PC-9 (cell line): ENCODE measurements at regions of chr19 and their contacts with region 1.

Region 1: GRCh38 chr19:51777570-51778462 is 16.8 kb downstream of the FPR2 start:
- DNase-seq: peak; percentile 44 to 63
- H3K4me3 ChIP-seq: no peak overlapping the region
- H3K27ac ChIP-seq: no peak overlapping the region
- H3K4me1 ChIP-seq: no peaks in the 10 kb centered on the region
- H3K27me3 ChIP-seq: peaks cover 25% of the 10 kb centered on the region
- CTCF ChIP-seq: peak; percentile 86

Region 2: GRCh38 chr19:51422053-51422448 is 355.8 kb before region 1 on chr19:
- CTCF ChIA-PET with region 1: no interaction called
- POLR2A ChIA-PET with region 1: no interaction called
- intact Hi-C with region 1: loop called (anchors 5 kb)
- DNase-seq: peak; percentile 56 to 87
- H3K4me3 ChIP-seq: no peak overlapping the region
- H3K27ac ChIP-seq: no peak overlapping the region
- H3K4me1 ChIP-seq: no peaks in the 10 kb centered on the region
- H3K27me3 ChIP-seq: peaks cover 40% of the 10 kb centered on the region
- CTCF ChIP-seq: peak; percentile 100

Region 3: GRCh38 chr19:51439021-51439465 is 338.8 kb before region 1 on chr19:
- CTCF ChIA-PET with region 1: interaction called, 17 read pairs
- POLR2A ChIA-PET with region 1: no interaction called
- intact Hi-C with region 1: no loop called
- DNase-seq: no peak
- H3K4me3 ChIP-seq: no peak overlapping the region
- H3K27ac ChIP-seq: no peak overlapping the region
- H3K4me1 ChIP-seq: no peaks in the 10 kb centered on the region
- H3K27me3 ChIP-seq: peaks cover 91% of the 10 kb centered on the region
- CTCF ChIP-seq: peak; percentile 36; the same call in 1 of the 2 replicates

Region 4: DNA sequence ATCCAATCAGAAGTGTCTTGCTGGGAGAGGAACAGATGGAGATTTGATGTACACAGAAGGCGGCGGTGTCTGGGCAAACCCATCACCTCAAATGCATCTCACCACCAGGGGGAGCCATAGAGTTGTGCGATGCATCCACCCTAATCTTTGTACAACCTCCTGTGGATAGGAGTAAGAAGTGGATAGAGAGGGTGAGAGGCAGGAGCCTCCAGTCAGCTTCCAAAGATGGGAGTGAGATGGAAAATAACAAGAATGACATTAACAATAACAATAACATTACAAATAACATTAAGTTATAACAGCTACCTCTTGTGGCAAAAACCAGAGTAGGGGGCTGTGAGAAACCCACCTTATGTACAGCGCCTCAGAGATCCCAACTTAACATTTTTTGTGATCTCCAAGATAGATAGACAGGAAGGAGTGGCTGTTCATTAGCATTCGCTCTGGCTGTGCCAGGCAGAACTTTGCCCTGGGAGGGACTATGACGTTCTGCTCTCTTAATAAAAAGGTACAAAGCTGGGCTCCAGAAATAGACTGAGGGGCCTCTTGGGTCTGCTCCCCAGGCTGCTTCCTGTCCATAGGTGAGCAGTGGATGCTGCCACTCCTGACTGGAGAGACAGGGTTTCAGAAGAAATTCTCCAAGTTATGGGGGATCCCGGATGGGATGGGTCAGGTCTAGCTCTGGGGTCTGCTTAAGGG is 304.7 kb before region 1 on chr19:
- CTCF ChIA-PET with region 1: interaction called, 3 read pairs
- POLR2A ChIA-PET with region 1: no interaction called
- intact Hi-C with region 1: loop called (anchors 2 kb)
- DNase-seq: peak in 1 of 2 experiments; percentile 59
- H3K4me3 ChIP-seq: no peak overlapping the region
- H3K27ac ChIP-seq: no peak overlapping the region
- H3K4me1 ChIP-seq: no peaks in the 10 kb centered on the region
- H3K27me3 ChIP-seq: peaks cover 23% of the 10 kb centered on the region; the same call in 1 of the 2 replicates
- CTCF ChIP-seq: peak; percentile 90

Region 5: DNA sequence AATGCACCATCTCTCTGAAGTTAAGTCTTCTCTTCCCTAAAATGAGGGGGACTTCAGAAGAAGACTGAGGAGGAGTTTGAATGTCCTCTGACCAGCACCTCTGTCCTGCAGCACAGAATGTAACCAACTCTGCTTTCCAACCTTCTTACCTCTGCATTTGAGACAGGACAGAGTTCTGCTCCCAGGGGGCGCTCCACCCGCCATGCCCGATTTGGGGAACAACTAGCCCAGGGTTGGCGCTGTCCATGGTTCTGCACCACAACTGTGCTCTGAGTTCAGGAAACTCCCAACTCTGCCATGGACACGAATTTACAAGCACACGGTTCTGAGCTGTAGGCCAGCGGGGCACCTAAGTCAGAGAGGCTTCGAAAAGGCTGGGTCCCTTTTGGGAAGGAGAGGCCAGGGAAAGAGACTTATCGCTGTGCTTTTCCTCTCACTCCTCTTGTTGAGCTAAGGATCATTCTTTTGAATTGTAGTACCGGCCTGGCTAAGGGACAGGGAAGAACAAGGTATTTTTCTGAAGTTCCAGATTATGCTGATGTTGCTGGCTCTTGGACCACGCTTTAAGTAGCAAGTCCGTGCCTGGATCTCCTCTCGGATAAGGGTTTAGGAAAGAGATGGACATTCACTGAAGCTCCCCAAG is 169.8 kb before region 1 on chr19:
- CTCF ChIA-PET with region 1: no interaction called
- POLR2A ChIA-PET with region 1: no interaction called
- intact Hi-C with region 1: loop called (anchors 1 kb)
- DNase-seq: peak; percentile 64 to 82
- H3K4me3 ChIP-seq: no peak overlapping the region
- H3K27ac ChIP-seq: no peak overlapping the region
- H3K4me1 ChIP-seq: no peaks in the 10 kb centered on the region
- H3K27me3 ChIP-seq: peaks cover 52% of the 10 kb centered on the region
- CTCF ChIP-seq: peak; percentile 83

Region 6: GRCh38 chr19:51660975-51661600 is 116.7 kb before region 1 on chr19:
- CTCF ChIA-PET with region 1: interaction called, 3 read pairs
- POLR2A ChIA-PET with region 1: no interaction called
- intact Hi-C with region 1: loop called (anchors 10 kb)
- DNase-seq: peak; percentile 48 to 72
- H3K4me3 ChIP-seq: no peak overlapping the region
- H3K27ac ChIP-seq: no peak overlapping the region
- H3K4me1 ChIP-seq: no peaks in the 10 kb centered on the region
- H3K27me3 ChIP-seq: peaks cover 47% of the 10 kb centered on the region
- CTCF ChIP-seq: peak; percentile 81

Region 7: DNA sequence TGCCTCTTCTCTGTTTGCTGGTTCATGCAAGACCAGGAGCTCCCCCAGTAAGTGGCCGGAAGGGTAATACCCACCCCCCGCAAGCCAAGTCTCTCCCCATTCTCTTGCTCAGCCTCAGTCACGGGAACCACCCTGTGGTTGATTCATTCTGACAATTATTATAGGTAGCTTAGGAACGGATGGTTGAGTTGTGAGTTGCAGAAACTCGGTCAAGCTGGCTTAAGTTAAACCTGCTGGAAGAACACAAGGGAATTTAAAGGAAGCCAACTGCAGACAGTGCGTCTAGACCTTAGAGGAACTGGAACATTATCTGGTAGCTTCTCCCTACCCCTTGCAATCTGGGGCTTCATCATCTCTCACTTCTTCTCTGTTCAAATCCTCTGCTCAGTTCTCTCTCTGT is 35.0 kb before region 1 on chr19:
- CTCF ChIA-PET with region 1: no interaction called
- POLR2A ChIA-PET with region 1: interaction called, 22 read pairs
- intact Hi-C with region 1: no loop called
- DNase-seq: no peak
- H3K4me3 ChIP-seq: no peak overlapping the region
- H3K27ac ChIP-seq: no peak overlapping the region
- H3K4me1 ChIP-seq: no peaks in the 10 kb centered on the region
- H3K27me3 ChIP-seq: peaks cover 87% of the 10 kb centered on the region
- CTCF ChIP-seq: no peak